Activated B cell treated with CpG ODN at 0.5 μM for 24 hours (primary cell): ENCODE measurements at regions of chr12 and their contacts with region 1.

Region 1: DNA sequence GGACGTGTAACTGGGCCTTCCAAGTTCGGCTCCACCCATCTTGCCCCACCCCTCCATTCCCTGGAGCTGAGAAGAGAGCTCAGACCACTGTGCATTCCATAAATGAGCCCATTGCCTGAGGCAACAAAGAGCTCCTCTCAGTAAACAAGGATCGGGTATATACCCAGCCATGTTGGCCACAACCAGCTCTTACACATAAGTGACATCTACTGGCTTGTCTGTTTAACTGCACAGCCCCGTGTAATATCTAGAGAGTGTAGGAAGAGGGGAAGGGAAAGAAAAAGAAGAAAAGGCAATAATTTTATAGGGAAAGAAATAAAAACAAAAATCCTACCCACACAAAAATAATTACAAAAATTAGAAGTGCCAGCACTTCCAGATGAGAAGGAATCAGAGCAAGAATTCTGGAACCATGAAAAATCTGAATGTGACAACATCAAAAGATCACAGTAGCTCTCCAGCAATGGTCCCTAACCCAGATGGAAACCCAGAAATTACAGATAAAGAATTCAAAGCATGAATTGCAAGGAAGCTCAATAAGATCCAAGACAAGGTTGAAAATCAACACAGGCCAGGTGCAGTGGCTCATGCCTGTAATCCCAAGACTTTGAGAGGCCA is 308.1 kb downstream of the RPAP3 start:
- DNase-seq: no peak
- ATAC-seq: peak; percentile 72
- H3K4me3 Mint-ChIP-seq: peak overlapping the region; percentile 61
- H3K27ac Mint-ChIP-seq: peak overlapping the region; percentile 94
- H3K4me1 Mint-ChIP-seq: peaks cover 92% of the 10 kb centered on the region
- H3K27me3 Mint-ChIP-seq: no peaks in the 10 kb centered on the region
- CTCF ChIP-seq: no peak

Region 2: DNA sequence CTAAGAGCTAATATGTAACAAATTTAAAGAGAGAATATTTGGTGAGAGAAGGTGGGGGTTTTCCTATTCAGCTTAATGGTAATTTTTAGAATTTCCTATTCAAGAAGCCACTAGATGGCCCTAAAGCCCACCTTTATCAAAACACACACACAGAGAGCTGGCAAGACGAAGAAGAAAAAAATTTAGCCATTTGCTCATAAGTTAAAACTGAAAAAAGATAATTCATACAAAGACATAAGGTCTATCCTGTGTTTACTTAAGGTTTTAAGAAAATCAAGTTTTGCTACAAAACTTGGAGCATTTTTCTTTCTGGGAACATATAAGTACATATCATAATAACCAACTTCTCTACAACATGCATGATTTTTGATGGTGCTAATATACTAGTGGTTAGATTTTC is 365.1 kb before region 1 on chr12:
- CTCF ChIA-PET with region 1: interaction called, 109 read pairs
- POLR2A ChIA-PET with region 1: interaction called, 20 read pairs
- intact Hi-C with region 1: loop called (anchors 1 kb)
- DNase-seq: no peak
- ATAC-seq: peak; percentile 81
- H3K4me3 Mint-ChIP-seq: no peak overlapping the region
- H3K27ac Mint-ChIP-seq: no peak overlapping the region
- H3K4me1 Mint-ChIP-seq: peaks cover 14% of the 10 kb centered on the region
- H3K27me3 Mint-ChIP-seq: no peaks in the 10 kb centered on the region
- CTCF ChIP-seq: peak; percentile 77

Region 3: GRCh38 chr12:47207340-47207717 is 190.4 kb before region 1 on chr12:
- CTCF ChIA-PET with region 1: interaction called, 18 read pairs
- POLR2A ChIA-PET with region 1: interaction called, 39 read pairs
- intact Hi-C with region 1: loop called (anchors 1 kb)
- DNase-seq: peak; percentile 51
- ATAC-seq: peak; percentile 86
- H3K4me3 Mint-ChIP-seq: peak overlapping the region; percentile 68
- H3K27ac Mint-ChIP-seq: peak overlapping the region; percentile 95
- H3K4me1 Mint-ChIP-seq: peaks cover 83% of the 10 kb centered on the region
- H3K27me3 Mint-ChIP-seq: no peaks in the 10 kb centered on the region
- CTCF ChIP-seq: no peak

Region 4: GRCh38 chr12:47307680-47308399 is 89.9 kb before region 1 on chr12:
- CTCF ChIA-PET with region 1: interaction called, 59 read pairs
- POLR2A ChIA-PET with region 1: interaction called, 81 read pairs
- intact Hi-C with region 1: loop called (anchors 1 kb)
- DNase-seq: peak; percentile 33
- ATAC-seq: peak; percentile 88
- H3K4me3 Mint-ChIP-seq: peak overlapping the region; percentile 95
- H3K27ac Mint-ChIP-seq: peak overlapping the region; percentile 94
- H3K4me1 Mint-ChIP-seq: peaks cover 67% of the 10 kb centered on the region
- H3K27me3 Mint-ChIP-seq: no peaks in the 10 kb centered on the region
- CTCF ChIP-seq: peak; percentile 36

Region 5: DNA sequence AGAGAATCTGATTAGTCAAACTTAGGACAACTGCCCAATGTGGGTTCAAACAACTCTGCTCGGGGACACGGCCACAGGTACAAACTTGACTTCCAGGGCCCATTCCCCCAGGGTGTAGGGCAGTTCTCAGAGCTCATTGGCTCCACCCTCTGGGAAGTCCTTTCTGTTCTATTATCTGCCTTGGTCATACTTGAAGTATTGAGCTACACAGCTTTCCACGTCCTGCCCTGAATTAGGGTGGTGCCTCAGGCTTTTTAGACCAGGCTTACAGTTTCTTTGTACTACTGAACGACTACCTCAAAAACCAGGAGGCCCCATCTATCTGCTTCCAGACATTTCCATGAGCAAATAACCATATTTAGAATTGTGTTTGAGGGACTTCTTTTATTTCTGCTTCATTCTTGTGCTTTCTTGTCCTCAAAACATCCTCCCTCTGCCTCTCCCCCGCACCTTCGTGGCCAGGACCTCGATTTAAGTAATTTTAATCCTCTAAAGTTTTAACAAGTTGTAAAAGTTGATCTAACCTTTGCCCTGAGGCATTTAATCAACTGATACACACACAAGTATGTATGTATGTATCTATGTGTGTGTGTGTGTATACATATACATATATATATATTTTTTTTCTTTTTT is 36.3 kb before region 1 on chr12:
- CTCF ChIA-PET with region 1: interaction called, 45 read pairs
- POLR2A ChIA-PET with region 1: interaction called, 83 read pairs
- intact Hi-C with region 1: loop called (anchors 1 kb)
- DNase-seq: no peak
- ATAC-seq: peak; percentile 68
- H3K4me3 Mint-ChIP-seq: peak overlapping the region; percentile 74
- H3K27ac Mint-ChIP-seq: peak overlapping the region; percentile 94
- H3K4me1 Mint-ChIP-seq: peaks cover 63% of the 10 kb centered on the region
- H3K27me3 Mint-ChIP-seq: no peaks in the 10 kb centered on the region
- CTCF ChIP-seq: no peak

Region 6: GRCh38 chr12:47408171-47408871 is 10.5 kb after region 1 on chr12:
- CTCF ChIA-PET with region 1: interaction called, 25 read pairs
- POLR2A ChIA-PET with region 1: no interaction called
- intact Hi-C with region 1: loop called (anchors 1 kb)
- DNase-seq: peak; percentile 46
- ATAC-seq: peak; percentile 97
- H3K4me3 Mint-ChIP-seq: no peak overlapping the region
- H3K27ac Mint-ChIP-seq: peak overlapping the region; percentile 63
- H3K4me1 Mint-ChIP-seq: peaks cover 28% of the 10 kb centered on the region
- H3K27me3 Mint-ChIP-seq: no peaks in the 10 kb centered on the region
- CTCF ChIP-seq: no peak